ENCODE measurements at regions of chr1 and their contacts with region 1.

Region 1: DNA sequence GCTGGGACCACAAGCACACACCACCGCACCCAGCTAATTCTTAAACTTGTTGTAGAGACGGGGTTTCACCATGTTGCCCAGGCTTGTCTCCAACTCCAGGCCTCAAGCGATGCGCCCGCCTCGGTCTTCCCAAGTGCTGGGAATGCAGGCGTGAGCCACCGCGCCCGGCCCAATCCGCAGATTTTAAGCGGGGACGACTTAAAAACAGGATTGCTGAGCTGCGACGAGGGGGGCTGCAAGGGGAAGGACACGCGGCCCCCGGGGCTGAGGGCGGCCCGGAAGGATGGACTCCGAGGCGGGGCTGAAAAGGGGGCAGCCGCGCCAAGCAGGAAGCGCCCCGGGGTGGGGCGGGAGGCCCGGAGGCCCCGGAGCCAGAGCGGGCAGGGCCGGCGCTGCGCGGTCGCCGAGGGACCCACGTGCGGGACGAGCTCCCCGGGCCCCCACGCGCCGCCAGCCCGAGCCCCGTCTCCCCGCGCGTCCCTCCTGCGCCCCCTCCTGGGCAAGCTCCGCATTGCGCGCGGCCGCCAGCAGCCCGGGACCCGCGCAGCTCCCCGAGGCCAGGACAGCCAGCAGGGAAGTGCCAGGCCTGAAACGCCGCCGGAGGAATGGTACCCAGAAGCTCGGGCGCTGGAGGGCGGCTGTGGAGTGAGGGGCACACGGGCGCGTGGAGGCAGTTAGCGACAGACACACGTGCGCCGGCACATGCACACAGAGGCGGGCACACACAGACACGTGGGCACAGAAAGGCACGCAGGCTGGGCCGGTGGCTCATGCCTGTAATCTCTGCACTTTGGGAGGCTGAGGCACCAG is 5.5 kb upstream of the PRKCZ start:
- DNase-seq: peak; percentile 56
- H3K27ac ChIP-seq: no peak overlapping the region
- CTCF ChIP-seq: peak; percentile 97

Region 2: DNA sequence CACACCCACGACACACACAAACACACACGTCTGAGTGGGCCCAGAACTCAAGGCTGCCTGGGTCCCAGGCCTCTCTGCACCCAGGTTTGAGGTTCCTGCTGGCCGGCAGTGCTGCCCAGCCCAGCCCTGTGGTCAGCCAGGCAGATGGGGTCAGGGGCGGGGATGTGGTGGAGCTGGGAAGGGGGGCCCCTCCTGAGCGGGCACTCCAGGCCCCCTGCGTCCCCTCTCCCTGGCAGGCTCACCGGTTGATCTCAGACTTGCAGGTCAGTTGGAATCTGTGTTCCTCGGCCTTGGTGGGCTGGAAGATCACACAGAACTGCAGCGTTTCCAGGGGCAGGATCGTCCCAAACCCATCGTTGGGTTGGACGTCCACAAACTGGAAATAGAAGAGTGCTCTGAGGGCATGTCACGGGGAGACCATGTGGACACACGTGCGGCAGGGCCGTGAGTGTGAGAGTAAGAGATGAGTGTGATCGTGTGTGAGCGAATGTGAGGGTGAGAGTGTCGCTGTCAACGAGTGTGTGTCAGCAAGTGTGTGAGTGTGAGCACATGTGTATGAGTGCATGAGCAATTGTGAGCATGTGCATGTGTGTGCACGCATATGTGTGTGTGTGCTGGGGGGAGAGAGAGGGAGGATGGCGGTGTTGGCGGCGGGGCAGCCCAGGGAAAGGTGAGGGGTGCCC is 106.0 kb before region 1 on chr1:
- CTCF ChIA-PET with region 1: interaction called, 27 read pairs
- POLR2A ChIA-PET with region 1: no interaction called
- DNase-seq: no peak
- H3K27ac ChIP-seq: no peak overlapping the region
- CTCF ChIP-seq: no peak

Region 3: DNA sequence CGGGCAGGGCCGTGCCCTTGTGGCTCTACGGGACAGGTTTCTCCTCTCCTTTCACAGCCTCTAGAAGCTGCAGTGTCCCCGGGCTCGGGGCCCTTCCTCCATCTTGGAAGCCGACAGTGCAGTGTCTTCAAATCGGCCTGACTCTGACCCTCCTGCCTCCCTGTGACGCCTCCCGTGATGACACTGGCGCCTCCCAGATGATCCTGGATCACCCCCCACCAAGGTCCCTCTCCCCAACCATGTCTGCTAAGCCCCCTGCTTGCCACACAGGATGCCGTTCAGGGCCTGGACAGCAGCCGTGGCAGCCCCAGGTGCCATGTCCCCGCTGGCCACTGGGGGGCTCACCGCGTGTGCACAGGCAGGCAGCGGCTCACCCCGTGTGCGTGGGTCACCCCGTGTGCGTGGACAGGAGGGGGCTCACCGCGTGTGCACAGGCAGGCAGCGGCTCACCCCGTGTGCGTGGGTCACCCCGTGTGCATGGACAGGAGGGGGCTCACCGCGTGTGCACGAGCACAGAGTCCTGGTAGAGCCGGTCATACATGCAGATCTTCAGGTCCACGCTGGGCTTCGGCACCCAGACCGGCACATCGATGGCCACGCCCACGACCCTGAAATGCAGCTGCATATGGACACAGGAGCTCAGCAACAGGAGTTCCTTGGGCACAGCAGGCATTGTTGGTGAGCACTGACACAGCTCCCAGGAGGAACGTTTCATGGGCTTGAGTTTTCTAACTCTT is 100.7 kb before region 1 on chr1:
- CTCF ChIA-PET with region 1: interaction called, 27 read pairs
- POLR2A ChIA-PET with region 1: no interaction called
- DNase-seq: peak; percentile 55
- H3K27ac ChIP-seq: no peak overlapping the region
- CTCF ChIP-seq: peak; percentile 91

Region 4: DNA sequence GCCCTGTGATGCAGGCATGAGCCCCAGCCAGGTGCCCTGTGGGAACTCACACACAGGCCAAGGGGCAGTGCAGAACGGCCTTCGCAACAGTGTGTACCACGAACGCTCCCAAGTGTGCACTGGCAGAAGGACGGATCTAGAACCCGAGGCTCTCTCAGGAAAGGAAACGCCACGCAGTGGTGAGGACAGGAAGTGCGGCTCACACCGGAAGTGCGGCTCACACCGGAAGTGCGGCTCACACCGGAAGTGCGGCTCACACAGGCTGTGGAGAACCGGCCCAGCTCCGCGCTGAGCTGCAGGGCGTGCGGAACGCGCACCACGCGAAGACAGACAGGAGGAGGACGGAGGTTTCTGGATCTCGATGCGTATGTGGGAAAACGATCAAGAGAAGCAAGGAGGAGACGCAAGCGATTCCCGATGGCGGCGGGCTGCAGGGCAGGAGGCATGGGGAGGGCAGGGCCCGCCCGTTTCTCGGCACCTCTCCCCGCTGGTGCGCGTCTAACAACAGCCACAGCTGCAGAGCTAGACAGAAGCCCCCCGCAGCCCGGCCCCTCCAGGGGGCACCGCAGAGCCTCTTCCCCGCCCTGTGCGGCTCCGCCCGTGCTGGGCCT is 89.8 kb before region 1 on chr1:
- CTCF ChIA-PET with region 1: interaction called, 69 read pairs
- POLR2A ChIA-PET with region 1: no interaction called
- DNase-seq: no peak
- H3K27ac ChIP-seq: no peak overlapping the region
- CTCF ChIP-seq: peak; percentile 35

Region 5: DNA sequence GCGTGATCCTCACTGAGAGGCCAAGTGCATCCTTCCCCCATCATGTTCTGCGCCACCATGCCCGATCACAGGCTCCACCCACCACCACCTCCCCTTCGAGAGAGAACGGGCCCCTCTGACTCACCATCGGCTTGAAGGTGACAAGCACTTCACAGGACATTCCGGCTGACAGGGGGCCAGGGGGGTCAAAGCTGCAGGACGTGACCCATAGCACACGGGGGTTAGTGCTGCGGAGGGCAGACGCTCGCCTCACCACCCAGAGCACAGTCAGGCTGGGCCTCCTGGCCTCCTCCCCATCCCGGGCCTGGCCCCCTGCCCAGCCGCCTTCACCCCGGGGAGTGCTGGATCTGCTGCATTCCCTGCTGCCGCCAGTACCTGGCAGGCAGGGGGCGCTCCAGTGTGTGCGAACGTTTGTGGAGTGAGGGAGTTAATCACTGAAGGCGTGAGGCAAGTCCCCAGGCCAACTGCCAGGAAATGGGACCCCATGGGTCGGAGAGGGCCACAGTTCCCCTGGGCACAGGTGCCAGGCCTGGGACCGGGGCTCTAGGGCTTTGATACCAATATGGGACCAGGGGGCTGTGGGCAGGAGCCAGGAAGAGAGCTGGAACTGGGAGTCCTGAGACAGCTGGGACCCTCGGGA is 84.8 kb before region 1 on chr1:
- CTCF ChIA-PET with region 1: interaction called, 69 read pairs
- POLR2A ChIA-PET with region 1: no interaction called
- DNase-seq: peak; percentile 88
- H3K27ac ChIP-seq: no peak overlapping the region
- CTCF ChIP-seq: peak; percentile 77

Region 6: GRCh38 chr1:2031546-2032540 is 12.9 kb before region 1 on chr1:
- CTCF ChIA-PET with region 1: interaction called, 20 read pairs
- POLR2A ChIA-PET with region 1: no interaction called
- DNase-seq: no peak
- H3K27ac ChIP-seq: no peak overlapping the region
- CTCF ChIP-seq: no peak

Measured in RWPE1 (cell line).